ENCODE measurements at regions of chr1 and their contacts with region 1.

Region 1: DNA sequence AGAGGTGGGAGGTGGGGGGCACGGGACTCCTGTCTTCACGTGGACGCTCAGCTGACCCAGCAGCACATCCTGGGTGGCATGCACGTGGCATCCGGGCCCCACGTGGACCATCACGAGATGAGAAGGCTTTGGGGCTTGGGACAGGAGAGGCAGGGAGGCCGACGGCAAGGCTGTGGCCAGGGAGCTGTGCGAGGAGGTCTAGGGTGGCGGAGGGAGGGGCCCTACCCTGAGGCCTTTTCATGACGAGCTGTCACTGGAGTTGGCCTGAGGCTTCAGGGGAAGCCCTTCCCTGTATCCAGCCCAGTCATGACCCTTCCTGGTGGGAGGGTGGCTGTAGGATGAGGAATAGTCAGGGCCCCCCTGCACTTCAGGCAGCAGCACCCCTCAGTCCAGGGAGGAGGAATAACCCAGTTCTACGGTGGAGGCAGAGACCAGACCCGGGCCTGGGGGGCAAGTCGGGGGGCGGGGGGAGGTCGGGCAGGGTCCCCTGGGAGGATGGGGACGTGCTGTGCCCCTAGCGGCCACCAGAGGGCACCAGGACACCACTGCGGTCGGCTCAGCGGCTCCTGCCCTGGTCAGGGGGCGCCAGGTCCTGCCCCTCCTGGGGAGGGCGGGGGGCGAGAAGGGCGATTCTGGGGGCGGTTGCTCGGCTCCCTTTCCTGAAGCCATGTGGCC is 2.0 kb upstream of the PERM1 start:
- DNase-seq: peak; percentile 73
- H3K4me3 Mint-ChIP-seq: no peak overlapping the region
- H3K27ac Mint-ChIP-seq: no peak overlapping the region
- H3K4me1 Mint-ChIP-seq: no peaks in the 10 kb centered on the region
- H3K27me3 Mint-ChIP-seq: peaks cover 55% of the 10 kb centered on the region

Region 2: GRCh38 chr1:1001461-1002204 is 17.7 kb after region 1 on chr1:
- CTCF ChIA-PET with region 1: interaction called, 13 read pairs
- DNase-seq: peak; percentile 73
- H3K4me3 Mint-ChIP-seq: no peak overlapping the region
- H3K27ac Mint-ChIP-seq: no peak overlapping the region
- H3K4me1 Mint-ChIP-seq: peaks cover 17% of the 10 kb centered on the region
- H3K27me3 Mint-ChIP-seq: peaks cover 97% of the 10 kb centered on the region

Region 3: GRCh38 chr1:1013105-1013921 is 29.4 kb after region 1 on chr1 and contains the start of gene ISG15:
- CTCF ChIA-PET with region 1: interaction called, 17 read pairs
- DNase-seq: peak; percentile 95
- H3K4me3 Mint-ChIP-seq: peak within 1 kb of the TSS; percentile 86
- H3K27ac Mint-ChIP-seq: peak within 1 kb of the TSS; percentile 95
- H3K4me1 Mint-ChIP-seq: peaks cover 42% of the 10 kb centered on the region
- H3K27me3 Mint-ChIP-seq: peaks cover 11% of the 10 kb centered on the region

Region 4: GRCh38 chr1:1019122-1019999 is 35.4 kb after region 1 on chr1:
- CTCF ChIA-PET with region 1: interaction called, 17 read pairs
- DNase-seq: peak; percentile 85
- H3K4me3 Mint-ChIP-seq: peak overlapping the region; percentile 68
- H3K27ac Mint-ChIP-seq: peak overlapping the region; percentile 69
- H3K4me1 Mint-ChIP-seq: peaks cover 35% of the 10 kb centered on the region
- H3K27me3 Mint-ChIP-seq: peaks cover 37% of the 10 kb centered on the region

Region 5: DNA sequence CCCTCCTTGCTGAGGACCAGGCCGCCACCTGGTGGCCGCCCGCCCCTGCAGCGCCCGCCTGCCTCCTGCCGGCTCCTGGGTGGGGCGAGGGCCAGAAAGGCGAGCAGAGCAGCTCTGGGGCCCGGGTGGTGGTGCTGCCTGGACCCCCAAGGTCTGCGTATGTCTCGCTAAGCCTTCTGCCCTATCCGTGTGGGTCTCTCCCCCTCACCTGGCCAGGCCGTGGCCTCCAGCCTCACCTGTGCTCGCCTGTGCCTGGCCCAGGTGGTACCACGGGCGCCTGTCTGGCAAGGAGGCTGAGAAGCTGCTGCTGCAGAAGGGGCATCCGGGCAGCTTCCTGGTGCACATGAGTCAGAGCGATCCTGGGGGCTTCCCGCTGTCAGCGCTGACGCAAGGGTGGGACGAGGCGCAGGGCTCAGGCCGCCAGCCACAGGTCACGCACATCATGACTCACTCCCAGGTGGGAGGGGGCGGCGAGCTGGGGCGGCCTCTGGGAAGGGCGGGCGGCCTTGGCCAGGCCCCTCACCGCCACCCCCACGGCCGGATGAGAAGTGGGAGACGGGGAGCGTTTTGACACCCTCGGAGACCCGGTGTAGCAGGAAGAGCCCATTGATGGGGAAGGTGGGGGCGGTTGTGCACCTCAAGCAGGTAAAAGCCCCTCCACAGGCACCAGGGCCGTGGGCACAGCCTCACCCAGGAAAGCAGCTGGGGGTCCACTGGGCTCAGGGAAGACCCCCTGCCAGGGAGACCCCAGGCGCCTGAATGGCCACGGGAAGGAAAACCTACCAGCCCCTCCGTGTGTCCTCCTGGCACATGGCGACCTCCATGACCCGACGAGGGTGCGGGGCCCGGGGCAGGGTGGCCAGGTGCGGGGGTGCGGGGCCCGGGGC is 80.3 kb after region 1 on chr1:
- CTCF ChIA-PET with region 1: interaction called, 40 read pairs
- DNase-seq: peak; percentile 81
- H3K4me3 Mint-ChIP-seq: peak overlapping the region; percentile 44
- H3K27ac Mint-ChIP-seq: peak overlapping the region; percentile 33
- H3K4me1 Mint-ChIP-seq: peaks cover 45% of the 10 kb centered on the region
- H3K27me3 Mint-ChIP-seq: peaks cover 35% of the 10 kb centered on the region